ENCODE measurements at regions of chr1 and their contacts with region 1.

Region 1: GRCh38 chr1:57627612-57628011 is 203.8 kb upstream of the DAB1 start:
- DNase-seq: no peak
- H3K4me3 ChIP-seq: no peak overlapping the region
- H3K27ac ChIP-seq: no peak overlapping the region
- H3K4me1 ChIP-seq: no peaks in the 10 kb centered on the region
- H3K27me3 ChIP-seq: no peaks in the 10 kb centered on the region
- CTCF ChIP-seq: no peak
- POLR2A ChIP-seq: no peak

Region 2: GRCh38 chr1:57321776-57322175 is 305.8 kb before region 1 on chr1:
- intact Hi-C with region 1: loop called (anchors 5 kb)
- DNase-seq: no peak
- H3K4me3 ChIP-seq: no peak overlapping the region
- H3K27ac ChIP-seq: no peak overlapping the region
- H3K4me1 ChIP-seq: no peaks in the 10 kb centered on the region
- H3K27me3 ChIP-seq: no peaks in the 10 kb centered on the region
- CTCF ChIP-seq: no peak
- POLR2A ChIP-seq: no peak